ENCODE measurements at regions of chr11 and their contacts with region 1.

Region 1: GRCh38 chr11:71998662-71999310 is at the start of gene IL18BP:
- DNase-seq: peak; percentile 18
- ATAC-seq: peak; percentile 80
- H3K4me3 Mint-ChIP-seq: peak within 1 kb of the TSS; percentile 81
- H3K27ac Mint-ChIP-seq: peak within 1 kb of the TSS; percentile 93
- H3K4me1 Mint-ChIP-seq: peaks cover 47% of the 10 kb centered on the region
- H3K27me3 Mint-ChIP-seq: no peaks in the 10 kb centered on the region
- CTCF ChIP-seq: no peak
- total RNA-seq, gene IL18BP: 26.8 and 27.5 TPM in 2 replicates

Region 2: DNA sequence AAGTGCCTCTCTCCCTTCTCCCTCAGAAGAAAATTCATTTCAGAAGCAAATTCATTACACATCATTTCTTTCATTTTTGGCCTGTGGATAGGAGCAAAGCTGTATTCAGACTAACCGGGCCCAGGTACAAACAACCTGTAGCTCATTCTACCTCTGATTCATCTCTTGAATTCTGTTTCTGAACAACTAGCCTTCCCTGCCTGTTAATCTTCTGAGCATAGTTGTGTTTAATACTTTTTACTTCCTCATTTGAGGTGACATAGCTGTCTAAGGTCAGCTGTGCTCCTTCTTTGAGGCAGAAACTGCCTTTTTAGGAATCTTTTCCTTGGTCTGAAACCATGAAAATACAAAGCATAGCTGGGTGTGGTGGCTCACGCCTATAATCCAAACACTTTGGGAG is 12.7 kb before region 1 on chr11:
- CTCF ChIA-PET with region 1: interaction called, 5 read pairs
- POLR2A ChIA-PET with region 1: interaction called, 19 read pairs
- intact Hi-C with region 1: no loop called
- DNase-seq: no peak
- ATAC-seq: peak; percentile 92
- H3K4me3 Mint-ChIP-seq: no peak overlapping the region
- H3K27ac Mint-ChIP-seq: peak overlapping the region; percentile 68
- H3K4me1 Mint-ChIP-seq: peaks cover 36% of the 10 kb centered on the region
- H3K27me3 Mint-ChIP-seq: no peaks in the 10 kb centered on the region
- CTCF ChIP-seq: no peak

Region 3: DNA sequence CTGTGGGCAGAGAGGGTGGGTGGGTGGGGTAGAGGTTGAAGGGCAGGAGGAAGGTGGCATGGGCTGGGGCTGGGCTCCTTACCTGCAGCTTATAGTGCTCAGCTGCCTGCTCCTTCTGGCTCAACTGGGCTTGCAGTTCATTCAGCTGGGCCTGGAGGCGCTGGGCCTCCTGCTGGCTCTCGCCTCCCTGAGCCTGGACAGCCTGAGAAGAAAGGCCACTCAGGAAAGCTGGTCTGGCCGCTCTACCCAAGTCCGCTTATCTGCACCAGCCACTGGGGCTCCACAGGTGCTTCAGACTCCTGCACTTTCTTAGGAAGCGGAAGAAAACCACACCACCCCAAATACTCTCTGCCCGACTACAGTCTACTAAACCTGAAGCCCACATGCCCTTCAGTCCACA is 10.4 kb after region 1 on chr11:
- CTCF ChIA-PET with region 1: no interaction called
- POLR2A ChIA-PET with region 1: interaction called, 3 read pairs
- intact Hi-C with region 1: loop called (anchors 2 kb)
- DNase-seq: no peak
- ATAC-seq: no peak
- H3K4me3 Mint-ChIP-seq: no peak overlapping the region
- H3K27ac Mint-ChIP-seq: no peak overlapping the region
- H3K4me1 Mint-ChIP-seq: peaks cover 3% of the 10 kb centered on the region
- H3K27me3 Mint-ChIP-seq: no peaks in the 10 kb centered on the region
- CTCF ChIP-seq: no peak